Heart left ventricle (tissue), 16 donors: ENCODE measurements at regions of chr20 and their contacts with region 1.

Region 1: GRCh38 chr20:19889011-19889953 is 127.9 kb upstream of the NAA20 start:
- DNase-seq: peak; percentile 71 to 83 (median 76)
- ATAC-seq: peak; percentile 65 to 85 (median 74)
- H3K4me3 ChIP-seq: peak overlapping the region; percentile 3 to 61 (median 52)
- H3K27ac ChIP-seq: peak overlapping the region; percentile 71 to 97 (median 89)
- H3K4me1 ChIP-seq: peaks cover 10 to 86% (median 65%) of the 10 kb centered on the region in 12 donors
- H3K27me3 ChIP-seq: no peaks in the 10 kb centered on the region
- CTCF ChIP-seq: no peak
- POLR2A ChIP-seq: no peak

Region 2: DNA sequence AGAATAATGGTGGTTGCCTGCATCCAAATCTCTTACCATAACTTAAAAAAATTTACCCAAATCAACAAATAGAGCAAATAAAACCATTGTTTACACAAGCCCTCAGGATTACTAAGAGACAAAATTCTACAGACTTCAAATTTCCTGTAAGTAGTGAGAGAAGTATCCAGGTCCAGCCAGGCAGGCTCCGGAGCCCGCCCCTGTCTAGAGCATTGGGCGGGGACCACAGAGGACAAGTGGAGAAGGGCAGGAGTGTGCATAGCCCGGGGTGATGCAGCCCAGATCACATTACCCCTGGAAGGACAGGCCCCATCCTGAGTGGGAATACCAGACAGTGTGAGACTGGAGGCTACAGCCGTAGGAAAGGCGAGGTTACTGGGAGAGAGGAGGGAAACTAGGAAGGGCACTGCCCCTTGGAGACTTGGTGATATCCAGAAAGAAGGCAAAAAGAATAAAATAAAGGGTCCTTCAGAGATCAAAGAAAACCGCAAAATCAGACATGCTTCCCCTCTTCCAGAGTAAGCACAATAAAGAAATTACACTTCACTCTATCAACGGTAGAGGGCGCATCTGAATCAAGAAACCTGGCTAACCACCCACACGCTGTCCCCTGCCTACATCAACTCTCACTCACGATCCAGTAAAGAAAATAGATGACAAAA is 104.6 kb before region 1 on chr20:
- intact Hi-C with region 1: loop called (anchors 2 to 10 kb)
- DNase-seq: peak in 4 of 5 donors; percentile 64 to 78 (median 73)
- ATAC-seq: peak; percentile 67 to 79 (median 72)
- H3K4me3 ChIP-seq: peak overlapping the region in 2 of 12 donors; percentile 5 to 6
- H3K27ac ChIP-seq: peak overlapping the region; percentile 69 to 91 (median 84)
- H3K4me1 ChIP-seq: peaks cover 12 to 68% (median 46%) of the 10 kb centered on the region in 12 donors
- H3K27me3 ChIP-seq: no peaks in the 10 kb centered on the region
- CTCF ChIP-seq: peak; percentile 65 to 87 (median 81)
- POLR2A ChIP-seq: no peak

Region 3: DNA sequence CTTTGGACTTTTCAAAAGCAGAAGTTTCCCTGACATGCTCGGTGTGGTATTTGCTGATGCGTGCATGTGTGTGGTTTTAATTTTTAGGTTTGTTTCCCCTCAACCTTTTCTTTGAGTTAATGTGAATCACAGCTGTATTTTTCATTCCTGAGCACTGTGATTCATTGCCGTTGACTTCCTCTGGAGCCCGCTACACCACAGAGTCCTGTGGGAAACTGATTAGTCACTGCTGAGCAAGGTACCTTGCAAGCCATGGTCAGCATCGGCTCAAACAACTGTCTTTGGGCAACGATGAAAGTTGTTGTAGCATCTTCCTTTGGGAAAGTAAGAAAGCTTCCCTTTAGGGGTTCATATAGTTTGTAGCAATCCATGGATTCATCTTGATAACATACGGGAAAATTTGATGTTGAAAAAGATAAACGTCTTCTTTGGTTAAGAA is 73.7 kb before region 1 on chr20:
- intact Hi-C with region 1: loop called in 8 of 10 experiments (anchors 2 to 10 kb)
- DNase-seq: peak in 4 of 5 donors; percentile 55 to 70 (median 62)
- ATAC-seq: peak; percentile 78 to 96 (median 94)
- H3K4me3 ChIP-seq: no peak overlapping the region
- H3K27ac ChIP-seq: peak overlapping the region in 11 of 12 donors; percentile 35 to 78 (median 62)
- H3K4me1 ChIP-seq: peaks cover 2 to 54% (median 36%) of the 10 kb centered on the region in 12 donors
- H3K27me3 ChIP-seq: no peaks in the 10 kb centered on the region
- CTCF ChIP-seq: peak in 4 of 12 donors; percentile 10 to 34 (median 18)
- POLR2A ChIP-seq: no peak

Region 4: GRCh38 chr20:19828232-19828631 is 61.0 kb before region 1 on chr20:
- intact Hi-C with region 1: loop called in 5 of 10 experiments (anchors 5 to 10 kb)
- DNase-seq: peak in 1 of 5 donors; percentile 23
- ATAC-seq: peak in 3 of 4 donors; percentile 47 to 66 (median 55)
- H3K4me3 ChIP-seq: no peak overlapping the region
- H3K27ac ChIP-seq: peak overlapping the region in 6 of 12 donors; percentile 1 to 19 (median 12)
- H3K4me1 ChIP-seq: peaks cover 4 to 54% (median 33%) of the 10 kb centered on the region in 12 donors
- H3K27me3 ChIP-seq: no peaks in the 10 kb centered on the region
- CTCF ChIP-seq: peak in 8 of 12 donors; percentile 20 to 64 (median 48)
- POLR2A ChIP-seq: no peak

Region 5: DNA sequence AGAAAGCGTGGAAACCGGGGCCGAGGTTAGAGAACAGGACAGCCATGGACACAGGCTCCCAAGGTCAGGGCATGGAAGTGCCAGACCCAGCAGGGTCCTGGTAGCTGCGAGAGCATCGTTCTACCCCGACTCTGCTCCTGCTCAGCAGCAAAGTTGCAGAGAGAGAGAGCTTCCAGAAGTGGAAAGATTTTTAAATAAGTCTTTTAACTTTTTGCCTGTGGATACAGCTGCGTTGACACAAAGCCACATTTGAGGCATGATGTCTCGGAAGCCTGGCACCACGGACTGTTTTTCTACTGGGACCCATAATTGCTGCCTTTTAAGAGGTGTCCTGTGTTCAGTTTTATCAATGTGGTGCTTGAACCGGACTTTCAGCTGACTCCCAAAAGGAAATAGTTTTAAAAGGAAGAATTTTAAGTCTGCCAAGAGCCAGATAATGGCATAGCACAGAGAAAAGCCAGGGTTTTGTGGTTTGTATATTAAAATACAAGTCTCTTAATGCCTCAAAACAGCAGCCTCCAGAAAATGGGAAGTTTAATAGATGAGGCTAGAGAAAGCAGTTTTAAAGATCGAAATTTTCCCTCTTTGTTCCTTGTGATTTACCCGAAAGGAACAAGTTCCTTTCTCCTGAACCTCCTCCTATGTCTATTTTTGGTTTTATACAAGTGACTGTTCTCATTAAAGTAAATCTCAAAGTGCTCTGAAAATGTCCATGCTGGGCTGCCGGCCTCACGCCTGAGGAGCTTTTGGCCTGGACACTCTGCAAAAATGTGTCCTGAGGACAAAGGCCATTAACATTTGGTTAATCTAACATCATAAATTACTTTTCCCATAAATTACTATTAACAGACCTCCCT is 39.7 kb before region 1 on chr20:
- intact Hi-C with region 1: loop called in 2 of 10 experiments (anchors 5 kb)
- DNase-seq: peak in 2 of 5 donors; percentile 33 to 34
- ATAC-seq: peak; percentile 55 to 75 (median 62)
- H3K4me3 ChIP-seq: peak overlapping the region in 2 of 12 donors; percentile 0 to 14
- H3K27ac ChIP-seq: peak overlapping the region; percentile 39 to 79 (median 67)
- H3K4me1 ChIP-seq: peaks cover 4 to 28% (median 21%) of the 10 kb centered on the region in 12 donors
- H3K27me3 ChIP-seq: no peaks in the 10 kb centered on the region
- CTCF ChIP-seq: no peak
- POLR2A ChIP-seq: no peak

Region 6: GRCh38 chr20:19934792-19935491 is 45.7 kb after region 1 on chr20:
- intact Hi-C with region 1: loop called in 3 of 10 experiments (anchors 5 kb)
- DNase-seq: peak in 4 of 5 donors; percentile 69 to 82 (median 77)
- ATAC-seq: peak; percentile 55 to 79 (median 62)
- H3K4me3 ChIP-seq: peak overlapping the region in 9 of 12 donors; percentile 25 to 55 (median 40)
- H3K27ac ChIP-seq: peak overlapping the region; percentile 7 to 90 (median 78)
- H3K4me1 ChIP-seq: peaks cover 7 to 94% (median 66%) of the 10 kb centered on the region in 12 donors
- H3K27me3 ChIP-seq: no peaks in the 10 kb centered on the region
- CTCF ChIP-seq: no peak
- POLR2A ChIP-seq: peak in 1 of 2 donors; percentile 24